Ascending aorta (tissue), 2 donors: ENCODE measurements at regions of chr11 and their contacts with region 1.

Region 1: GRCh38 chr11:125592305-125593112 is at the start of gene STT3A:
- DNase-seq: peak; percentile 99 to 100
- H3K4me3 ChIP-seq: peak within 1 kb of the TSS; percentile 82 to 99
- H3K27ac ChIP-seq: peak within 1 kb of the TSS; percentile 94 to 100
- H3K4me1 ChIP-seq: peaks cover 7 to 13% of the 10 kb centered on the region in 2 donors
- H3K27me3 ChIP-seq: no peaks in the 10 kb centered on the region
- CTCF ChIP-seq: no peak
- total RNA-seq, gene STT3A: 88.9 TPM

Region 2: DNA sequence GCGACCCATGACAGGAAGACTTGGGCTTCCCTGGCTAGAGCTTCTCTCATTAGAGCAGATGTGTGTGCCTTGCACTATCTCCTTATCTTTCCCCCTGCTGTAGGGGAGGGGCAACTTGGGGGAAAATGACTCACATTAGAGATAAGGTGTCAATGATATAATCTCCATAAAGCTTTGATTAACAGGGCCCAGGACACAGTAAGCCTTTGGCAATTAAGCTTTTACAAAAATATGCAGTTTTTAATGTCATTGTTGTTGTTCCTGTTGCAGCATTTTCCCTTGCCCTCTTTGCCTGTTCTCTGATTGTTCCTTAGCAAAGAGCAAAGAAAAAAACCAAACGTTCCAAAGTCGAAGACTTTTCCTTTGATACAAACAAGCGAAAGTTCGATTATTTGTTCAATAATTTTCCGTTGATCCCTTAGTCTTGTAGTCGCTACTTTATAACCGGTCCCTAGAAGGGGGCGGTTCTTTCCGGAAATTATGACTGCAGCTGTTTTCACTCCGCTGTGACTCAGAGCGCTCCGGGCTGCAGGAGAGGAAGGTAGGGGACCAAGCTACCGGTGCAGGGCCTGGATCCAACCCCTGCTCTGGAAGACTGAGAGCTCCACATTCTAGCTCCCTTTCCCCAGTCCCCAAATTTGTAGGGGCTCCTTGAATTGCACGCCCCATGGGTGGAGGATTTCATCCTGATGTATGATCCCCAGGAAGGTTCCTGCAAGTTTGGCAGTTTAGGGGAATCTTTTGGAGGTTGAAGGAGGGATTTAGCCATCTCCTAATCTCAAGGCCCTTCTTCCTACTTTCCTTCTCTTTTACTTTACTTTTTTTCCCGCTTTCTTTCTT is 1477.3 kb before region 1 on chr11 and contains the start of gene VWA5A:
- intact Hi-C with region 1: loop called (anchors 10 kb)
- DNase-seq: peak; percentile 44 to 92
- H3K4me3 ChIP-seq: peak within 1 kb of the TSS; percentile 49 to 72
- H3K27ac ChIP-seq: peak within 1 kb of the TSS; percentile 57 to 61
- H3K4me1 ChIP-seq: peaks cover 0 to 6% of the 10 kb centered on the region in 2 donors
- H3K27me3 ChIP-seq: no peaks in the 10 kb centered on the region
- CTCF ChIP-seq: no peak
- total RNA-seq, gene VWA5A: 7.6 TPM

Region 3: DNA sequence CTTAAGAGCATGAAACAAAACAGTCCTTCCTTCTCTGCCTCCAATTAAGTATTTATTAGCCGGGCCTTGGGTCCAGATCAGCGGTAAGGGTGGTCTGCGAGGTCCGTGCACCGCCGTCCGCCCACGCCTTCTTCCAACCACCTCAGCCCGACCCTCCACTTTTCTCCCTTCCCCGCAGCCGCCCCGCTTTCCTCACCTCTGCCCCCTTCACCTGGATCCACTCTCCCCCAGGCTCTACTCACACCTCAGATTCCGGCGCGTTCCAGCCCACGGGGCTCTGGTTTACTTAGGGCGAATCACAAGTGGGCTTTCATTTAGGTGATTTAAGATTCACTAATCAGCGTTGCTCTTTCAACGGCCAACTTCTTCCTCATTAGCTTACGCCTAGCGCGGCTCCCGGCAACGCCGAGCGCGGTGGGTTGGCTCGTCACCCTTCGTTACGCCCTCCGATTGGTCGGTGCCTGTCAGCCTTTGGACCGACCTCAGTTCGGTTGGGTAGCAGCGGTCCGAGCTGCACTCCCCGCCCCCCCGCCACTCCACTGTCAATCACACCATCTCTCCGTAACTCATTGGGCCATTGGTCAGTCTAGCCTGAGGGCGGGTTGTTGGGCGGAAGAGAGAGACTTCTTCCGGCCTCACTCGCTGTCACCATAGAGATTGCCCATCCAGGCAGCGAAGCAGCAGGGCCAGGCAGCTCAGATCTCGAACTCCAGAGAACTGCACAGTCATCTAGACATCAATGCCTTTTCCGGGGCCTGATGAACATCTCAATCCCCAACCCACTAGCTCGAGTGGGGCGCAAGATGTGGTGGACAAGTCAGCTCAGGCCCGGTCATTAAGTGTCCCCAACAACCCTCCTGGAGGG is 480.9 kb before region 1 on chr11 and contains the start of gene TMEM218:
- intact Hi-C with region 1: loop called (anchors 1 kb)
- DNase-seq: peak; percentile 98 to 99
- H3K4me3 ChIP-seq: peak within 1 kb of the TSS; percentile 71 to 76
- H3K27ac ChIP-seq: peak within 1 kb of the TSS; percentile 69
- H3K4me1 ChIP-seq: peaks cover 0 to 4% of the 10 kb centered on the region in 2 donors
- H3K27me3 ChIP-seq: no peaks in the 10 kb centered on the region
- CTCF ChIP-seq: no peak
- total RNA-seq, gene TMEM218: 0.64 TPM

Region 4: GRCh38 chr11:125494974-125495725 is 97.4 kb before region 1 on chr11:
- intact Hi-C with region 1: loop called (anchors 1 kb)
- DNase-seq: peak in 1 of 2 donors; percentile 72
- H3K4me3 ChIP-seq: peak overlapping the region; percentile 63 to 98
- H3K27ac ChIP-seq: peak overlapping the region; percentile 80 to 96
- H3K4me1 ChIP-seq: peaks cover 7 to 8% of the 10 kb centered on the region in 2 donors
- H3K27me3 ChIP-seq: no peaks in the 10 kb centered on the region
- CTCF ChIP-seq: no peak

Region 5: GRCh38 chr11:125542709-125543108 is 49.8 kb before region 1 on chr11:
- intact Hi-C with region 1: no loop called
- DNase-seq: no peak
- H3K4me3 ChIP-seq: no peak overlapping the region
- H3K27ac ChIP-seq: no peak overlapping the region
- H3K4me1 ChIP-seq: no peaks in the 10 kb centered on the region
- H3K27me3 ChIP-seq: no peaks in the 10 kb centered on the region
- CTCF ChIP-seq: no peak

Region 6: DNA sequence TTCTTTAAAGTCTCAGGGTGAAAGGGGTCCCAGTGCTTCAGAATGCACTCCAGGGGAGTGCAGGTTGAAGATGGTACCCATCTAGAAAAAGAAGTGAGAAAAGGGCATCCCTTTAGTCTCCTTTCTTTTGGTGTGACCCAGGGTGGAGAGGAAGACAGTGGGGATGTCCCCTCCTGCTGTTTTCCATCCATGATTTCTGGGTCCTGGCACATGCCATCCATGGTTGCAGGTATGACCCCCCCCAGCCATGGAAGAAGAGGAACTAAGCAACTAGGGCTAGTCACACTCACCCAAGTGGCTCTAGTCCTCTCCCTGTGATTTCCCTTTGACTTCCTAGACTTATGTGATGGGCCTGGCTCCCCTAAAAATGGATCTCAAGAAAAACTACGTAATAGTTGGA is 39.2 kb before region 1 on chr11:
- intact Hi-C with region 1: no loop called
- DNase-seq: no peak
- H3K4me3 ChIP-seq: no peak overlapping the region
- H3K27ac ChIP-seq: no peak overlapping the region
- H3K4me1 ChIP-seq: no peaks in the 10 kb centered on the region
- H3K27me3 ChIP-seq: no peaks in the 10 kb centered on the region
- CTCF ChIP-seq: no peak

Region 7: DNA sequence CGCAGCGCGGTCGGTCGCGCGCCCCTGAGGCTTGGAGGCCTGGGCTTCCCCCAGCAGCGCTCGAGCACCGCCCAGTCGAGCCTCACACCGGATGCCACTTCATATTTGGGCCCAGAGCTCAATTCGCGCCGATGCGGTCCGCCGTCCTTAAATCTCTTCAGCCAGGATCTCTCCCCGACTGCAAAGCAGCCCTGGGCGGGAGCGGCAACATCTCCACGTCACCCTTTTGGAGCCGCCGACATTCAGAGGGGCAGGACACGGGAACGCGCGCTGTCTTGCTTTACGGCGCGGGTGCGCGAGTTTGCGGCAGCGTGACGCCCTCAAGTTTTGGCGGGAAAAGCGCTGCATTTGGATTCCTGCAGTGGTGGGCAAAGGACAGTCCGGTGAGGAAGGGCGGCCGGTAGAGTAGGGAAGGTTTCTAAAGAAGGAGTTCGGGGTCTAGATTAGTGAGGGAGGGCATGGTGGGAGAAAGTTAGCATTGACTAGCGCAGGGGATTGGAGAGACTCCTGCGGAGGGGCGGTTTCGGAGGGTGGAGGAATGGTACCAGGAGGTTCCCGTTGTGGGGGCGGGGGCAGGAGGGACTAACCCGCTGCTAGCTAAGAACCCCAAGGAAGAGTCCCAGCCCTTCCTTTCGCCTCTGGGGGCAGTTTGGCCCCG is 33.2 kb after region 1 on chr11:
- intact Hi-C with region 1: loop called (anchors 1 kb)
- DNase-seq: peak; percentile 34 to 92
- H3K4me3 ChIP-seq: peak overlapping the region; percentile 65 to 68
- H3K27ac ChIP-seq: peak overlapping the region; percentile 88 to 95
- H3K4me1 ChIP-seq: peaks cover 0 to 17% of the 10 kb centered on the region in 2 donors
- H3K27me3 ChIP-seq: no peaks in the 10 kb centered on the region
- CTCF ChIP-seq: no peak

Region 8: DNA sequence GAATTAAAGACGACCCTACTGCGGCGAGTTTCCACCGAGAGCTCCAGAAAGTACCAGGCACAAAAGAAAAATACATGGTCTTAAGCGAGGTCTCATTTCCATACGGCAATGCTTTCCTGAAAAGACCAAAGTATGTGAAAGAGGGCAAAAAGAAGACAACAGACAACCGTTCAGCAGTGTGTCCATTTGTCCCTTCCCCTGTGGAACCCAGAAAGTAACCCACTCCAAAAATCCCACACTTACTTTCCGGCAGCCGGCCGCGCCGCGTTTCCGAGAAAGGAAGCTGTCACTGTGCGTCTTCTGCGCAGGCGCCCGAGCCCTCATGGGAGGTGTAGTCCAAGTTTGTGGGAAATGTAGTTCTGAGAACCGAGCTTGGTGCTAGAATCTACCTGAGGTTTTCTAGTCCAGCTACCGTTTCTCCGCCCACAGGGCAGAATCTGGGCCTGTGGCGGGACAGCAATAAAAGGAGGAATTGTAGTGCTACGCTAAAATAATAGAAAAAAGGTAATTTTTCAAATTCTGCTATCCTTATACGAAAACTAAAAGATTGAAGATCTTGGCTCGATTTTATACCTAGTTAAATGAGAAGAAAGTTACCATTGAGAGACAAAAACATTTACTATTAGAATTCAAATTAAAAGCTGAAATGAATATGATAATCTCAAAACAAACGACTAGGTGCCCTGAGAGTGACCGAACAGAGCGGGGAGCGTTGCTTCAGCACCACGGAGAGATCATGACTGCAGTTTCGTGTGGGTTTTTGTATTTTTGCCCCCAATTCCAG is 310.6 kb after region 1 on chr11 and contains the start of gene PUS3:
- intact Hi-C with region 1: loop called (anchors 5 kb)
- DNase-seq: peak; percentile 62 to 95
- H3K4me3 ChIP-seq: peak within 1 kb of the TSS; percentile 61 to 63
- H3K27ac ChIP-seq: peak within 1 kb of the TSS; percentile 66 to 83
- H3K4me1 ChIP-seq: peaks cover 2 to 8% of the 10 kb centered on the region in 2 donors
- H3K27me3 ChIP-seq: peaks cover 5% of the 10 kb centered on the region
- CTCF ChIP-seq: no peak
- total RNA-seq, gene PUS3: 31.3 TPM

Region 9: GRCh38 chr11:126268708-126269579 is 676.4 kb after region 1 on chr11 and contains the starts of genes FOXRED1 and SRPRA:
- intact Hi-C with region 1: loop called (anchors 1 kb)
- DNase-seq: peak; percentile 97 to 100
- H3K4me3 ChIP-seq: peak within 1 kb of the TSS; percentile 81 to 93
- H3K27ac ChIP-seq: peak within 1 kb of the TSS; percentile 90 to 91
- H3K4me1 ChIP-seq: peaks cover 0 to 13% of the 10 kb centered on the region in 2 donors
- H3K27me3 ChIP-seq: no peaks in the 10 kb centered on the region
- CTCF ChIP-seq: no peak
- total RNA-seq, gene FOXRED1: 1.8 TPM
- total RNA-seq, gene SRPRA: 49.7 TPM